A549 (cell line): ENCODE measurements at regions of chr7 and their contacts with region 1.

Region 1: DNA sequence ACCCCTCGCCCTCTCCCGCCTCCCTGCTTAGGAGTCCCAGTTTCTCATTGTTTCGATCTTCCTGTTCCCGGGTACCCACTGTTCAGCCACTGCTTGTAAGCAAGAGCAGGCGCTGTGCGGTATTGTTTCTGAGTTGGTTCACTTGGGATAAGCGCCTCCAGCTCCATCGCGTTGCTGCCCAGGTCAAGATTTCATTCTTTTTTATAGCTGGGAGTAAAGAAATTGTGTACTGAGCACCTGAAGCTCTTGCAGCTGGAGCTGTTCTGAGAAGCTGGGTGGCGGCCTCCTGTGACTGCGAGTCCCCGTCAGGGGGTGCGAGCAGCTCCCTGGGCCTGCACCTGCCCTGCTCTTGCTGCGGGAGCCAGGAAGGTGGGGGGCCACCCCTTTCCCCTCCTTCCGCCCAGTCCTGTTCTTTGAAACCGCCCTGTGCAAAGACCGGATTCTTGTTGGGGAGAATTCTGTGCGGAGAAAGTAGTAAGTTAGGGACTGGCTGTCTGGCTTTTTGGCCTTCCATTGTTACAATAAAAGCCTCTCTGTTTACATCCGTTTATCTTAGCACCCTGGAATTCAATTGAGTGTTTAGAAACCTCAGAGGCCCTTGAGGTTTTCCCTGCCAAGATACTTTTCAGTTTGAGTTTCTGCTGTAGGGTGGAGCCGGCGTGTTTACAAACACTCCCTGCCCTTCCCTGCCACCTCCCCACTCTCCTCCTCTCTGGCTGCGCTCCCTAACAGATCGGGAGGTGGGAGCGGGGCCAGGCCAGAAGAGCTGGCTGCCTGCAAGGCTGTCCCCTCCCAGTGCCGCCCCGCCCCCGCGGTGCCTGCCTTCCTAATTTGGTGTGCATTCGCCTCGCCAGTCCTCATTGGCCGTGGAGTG is 30.8 kb upstream of the AP5Z1 start:
- DNase-seq: peak; percentile 96 to 99
- ATAC-seq: peak; percentile 93 to 95
- H3K4me3 ChIP-seq: 0 out of 3 replicates have a peak overlapping the region, but pooled peaks have one; percentile 4
- H3K27ac ChIP-seq: peak overlapping the region; percentile 96 to 99
- H3K4me1 ChIP-seq: peaks cover 84% of the 10 kb centered on the region
- CTCF ChIP-seq: no peak
- EP300 ChIP-seq: peak; percentile 15 to 62; a peak in 3 of 5 replicates
- POLR2A ChIP-seq: no peak
- RAD21 ChIP-seq: no peak

Region 2: GRCh38 chr7:4775250-4775847 is 30.7 kb after region 1 on chr7 and contains the start of gene AP5Z1:
- CTCF ChIA-PET with region 1: no interaction called
- POLR2A ChIA-PET with region 1: interaction called, 17 read pairs
- DNase-seq: peak; percentile 96 to 99
- ATAC-seq: peak; percentile 92 to 95
- H3K4me3 ChIP-seq: peak within 1 kb of the TSS; percentile 77
- H3K27ac ChIP-seq: peak within 1 kb of the TSS; percentile 87 to 92
- H3K4me1 ChIP-seq: peaks cover 18% of the 10 kb centered on the region; the same call in 1 of the 3 replicates
- CTCF ChIP-seq: no peak
- EP300 ChIP-seq: no peak
- POLR2A ChIP-seq: peak; percentile 78
- RAD21 ChIP-seq: no peak
- polyA plus RNA-seq, gene AP5Z1: 6.8 and 7.1 TPM in 2 replicates